PC-3 (cell line): ENCODE measurements at regions of chr5 and their contacts with region 1.

Region 1: DNA sequence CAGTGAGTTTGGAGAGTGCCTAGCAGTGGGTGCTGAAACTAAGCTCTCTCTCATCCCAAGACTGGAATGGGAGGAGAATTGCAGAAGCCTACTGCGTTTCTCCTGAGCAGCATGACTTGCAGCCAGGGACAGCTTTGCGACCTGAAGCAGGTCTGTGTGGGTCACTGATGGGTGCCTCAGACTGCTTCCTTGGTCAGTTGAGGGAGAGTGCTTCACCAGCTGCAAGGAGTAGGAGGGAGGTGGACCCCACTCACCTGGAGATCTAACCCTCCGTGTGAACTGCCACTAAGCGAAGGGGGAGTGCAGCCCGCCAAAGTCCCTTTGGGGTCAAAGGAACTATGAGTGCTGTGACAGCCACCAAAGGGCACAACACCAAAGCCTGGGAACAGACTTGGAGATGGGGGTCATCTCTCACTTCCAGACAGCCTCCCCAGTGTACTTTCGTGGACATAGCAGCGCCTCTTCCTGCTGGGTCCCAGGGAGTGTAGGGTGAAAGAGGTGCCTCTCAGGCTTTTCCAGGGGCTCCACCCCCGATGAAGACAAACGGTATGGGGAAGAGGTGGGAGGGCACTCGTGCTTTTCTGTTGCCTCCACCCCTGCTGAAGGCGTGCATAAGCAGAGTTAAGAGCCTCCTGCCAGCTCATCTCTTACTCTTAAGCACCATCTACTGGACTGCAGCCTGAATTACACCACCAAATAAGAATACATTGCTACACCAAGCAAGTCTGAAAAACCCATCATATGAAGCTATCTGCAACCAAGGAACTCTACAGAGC is 34.3 kb upstream of the MACIR start:
- DNase-seq: peak; percentile 92
- ATAC-seq: peak; percentile 94
- H3K4me3 ChIP-seq: peak overlapping the region; percentile 41
- H3K27ac ChIP-seq: 0 out of 2 replicates have a peak overlapping the region, but pooled peaks have one; percentile 7
- H3K4me1 ChIP-seq: peaks cover 9% of the 10 kb centered on the region
- H3K27me3 ChIP-seq: no peaks in the 10 kb centered on the region
- CTCF ChIP-seq: peak; percentile 87

Region 2: DNA sequence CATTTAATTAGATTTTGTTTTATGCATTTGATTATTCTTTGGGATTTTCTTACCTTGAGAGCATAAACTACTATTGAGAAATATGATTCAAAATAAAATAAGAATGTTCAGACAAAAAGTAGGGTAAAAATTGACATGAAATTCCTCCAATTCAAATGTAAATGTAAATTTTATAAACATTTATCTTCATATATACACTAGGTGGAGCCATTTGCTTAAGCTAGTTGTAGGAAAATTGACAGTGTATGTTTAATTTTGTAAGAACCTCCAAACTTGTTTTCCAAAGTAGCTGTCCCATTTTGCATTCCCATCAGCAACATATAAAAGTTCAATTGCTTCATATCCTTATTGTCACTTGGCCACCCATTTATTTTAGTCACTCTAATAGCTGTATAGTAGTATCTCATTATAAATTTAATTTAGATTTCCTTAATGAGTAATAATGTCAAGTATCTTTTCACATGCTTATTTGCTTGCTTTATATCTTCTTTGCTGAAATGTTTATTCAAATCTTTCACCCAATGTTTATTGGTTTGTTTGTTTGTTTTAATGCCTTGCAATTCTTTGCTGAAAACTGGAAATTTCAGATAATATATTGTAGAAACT is 687.9 kb before region 1 on chr5:
- CTCF ChIA-PET with region 1: no interaction called
- POLR2A ChIA-PET with region 1: no interaction called
- intact Hi-C with region 1: loop called (anchors 1 kb)
- DNase-seq: peak; percentile 63
- ATAC-seq: peak; percentile 57
- H3K4me3 ChIP-seq: no peak overlapping the region
- H3K27ac ChIP-seq: no peak overlapping the region
- H3K4me1 ChIP-seq: no peaks in the 10 kb centered on the region
- H3K27me3 ChIP-seq: peaks cover 3% of the 10 kb centered on the region
- CTCF ChIP-seq: peak; percentile 79

Region 3: DNA sequence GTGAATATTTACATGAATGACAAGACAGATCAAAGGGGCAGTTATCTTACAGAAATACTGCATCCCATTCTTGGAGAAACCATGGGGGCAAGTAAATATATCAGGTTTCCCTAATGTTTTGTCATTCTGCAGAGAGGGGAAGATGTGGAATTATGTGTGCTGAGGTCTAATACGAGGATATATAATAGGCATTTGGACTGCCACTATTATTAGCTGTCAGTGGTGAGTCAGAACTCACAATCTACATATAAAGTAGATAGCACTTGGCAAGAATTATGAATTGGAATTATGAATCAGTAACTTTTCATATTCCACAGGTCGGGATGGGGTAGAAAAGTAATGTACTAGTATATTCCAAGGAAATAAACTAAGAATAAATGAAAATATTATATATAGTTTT is 226.1 kb before region 1 on chr5:
- CTCF ChIA-PET with region 1: no interaction called
- POLR2A ChIA-PET with region 1: no interaction called
- intact Hi-C with region 1: no loop called
- DNase-seq: peak; percentile 49
- ATAC-seq: peak; percentile 93
- H3K4me3 ChIP-seq: no peak overlapping the region
- H3K27ac ChIP-seq: no peak overlapping the region
- H3K4me1 ChIP-seq: peaks cover 9% of the 10 kb centered on the region; the same call in 1 of the 2 replicates
- H3K27me3 ChIP-seq: no peaks in the 10 kb centered on the region
- CTCF ChIP-seq: no peak

Region 4: GRCh38 chr5:103041071-103041676 is 183.1 kb before region 1 on chr5:
- CTCF ChIA-PET with region 1: interaction called, 3 read pairs
- POLR2A ChIA-PET with region 1: no interaction called
- intact Hi-C with region 1: loop called (anchors 5 kb)
- DNase-seq: peak; percentile 88
- ATAC-seq: peak; percentile 78
- H3K4me3 ChIP-seq: no peak overlapping the region
- H3K27ac ChIP-seq: no peak overlapping the region
- H3K4me1 ChIP-seq: peaks cover 8% of the 10 kb centered on the region; the same call in 1 of the 2 replicates
- H3K27me3 ChIP-seq: no peaks in the 10 kb centered on the region
- CTCF ChIP-seq: peak; percentile 82

Region 5: GRCh38 chr5:103166706-103167105 is 57.6 kb before region 1 on chr5:
- CTCF ChIA-PET with region 1: no interaction called
- POLR2A ChIA-PET with region 1: interaction called, 11 read pairs
- intact Hi-C with region 1: no loop called
- DNase-seq: no peak
- ATAC-seq: no peak
- H3K4me3 ChIP-seq: no peak overlapping the region
- H3K27ac ChIP-seq: no peak overlapping the region
- H3K4me1 ChIP-seq: no peaks in the 10 kb centered on the region
- H3K27me3 ChIP-seq: no peaks in the 10 kb centered on the region
- CTCF ChIP-seq: no peak

Region 6: GRCh38 chr5:103178167-103178566 is 46.1 kb before region 1 on chr5:
- CTCF ChIA-PET with region 1: interaction called, 12 read pairs
- POLR2A ChIA-PET with region 1: no interaction called
- intact Hi-C with region 1: no loop called
- DNase-seq: peak; percentile 25
- ATAC-seq: no peak; the same call in 1 of the 2 replicates
- H3K4me3 ChIP-seq: no peak overlapping the region
- H3K27ac ChIP-seq: no peak overlapping the region
- H3K4me1 ChIP-seq: peaks cover 8% of the 10 kb centered on the region; the same call in 1 of the 2 replicates
- H3K27me3 ChIP-seq: no peaks in the 10 kb centered on the region
- CTCF ChIP-seq: peak; percentile 40; the same call in 1 of the 2 replicates

Region 7: GRCh38 chr5:103375350-103375749 is 151.0 kb after region 1 on chr5:
- CTCF ChIA-PET with region 1: no interaction called
- POLR2A ChIA-PET with region 1: no interaction called
- intact Hi-C with region 1: no loop called
- DNase-seq: peak; percentile 77
- ATAC-seq: peak; percentile 82
- H3K4me3 ChIP-seq: no peak overlapping the region
- H3K27ac ChIP-seq: no peak overlapping the region
- H3K4me1 ChIP-seq: peaks cover 16% of the 10 kb centered on the region
- H3K27me3 ChIP-seq: no peaks in the 10 kb centered on the region
- CTCF ChIP-seq: peak; percentile 71

Region 8: DNA sequence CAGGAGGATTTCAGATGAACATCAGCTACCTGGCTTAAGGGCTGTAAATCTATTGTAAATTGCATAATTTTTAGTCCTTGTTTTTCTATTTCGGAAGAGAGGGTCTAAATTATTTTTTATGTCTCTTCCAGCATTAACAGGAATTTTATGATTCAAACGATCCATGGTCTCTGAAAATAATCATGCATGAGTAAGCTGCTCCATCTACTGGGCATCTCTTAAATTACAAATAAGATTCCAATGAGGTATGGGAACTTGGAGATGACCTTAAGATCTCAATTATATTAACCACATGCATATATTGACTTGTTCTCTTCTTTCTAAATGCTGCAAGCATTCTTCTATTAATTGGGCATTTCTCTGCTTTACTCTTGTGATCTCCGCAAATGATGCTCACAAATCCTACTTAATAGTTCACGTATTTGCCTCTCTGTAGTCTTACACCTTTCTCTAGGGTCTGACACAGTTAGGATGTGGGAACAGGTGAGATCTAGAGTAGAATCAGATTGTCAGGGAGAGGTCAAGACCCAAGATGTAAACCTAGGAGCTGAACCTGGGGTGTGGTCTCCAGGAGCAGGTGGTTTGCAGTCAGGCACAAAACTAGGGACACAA is 251.4 kb after region 1 on chr5:
- CTCF ChIA-PET with region 1: interaction called, 3 read pairs
- POLR2A ChIA-PET with region 1: no interaction called
- intact Hi-C with region 1: loop called (anchors 2 kb)
- DNase-seq: peak; percentile 91
- ATAC-seq: peak; percentile 61
- H3K4me3 ChIP-seq: no peak overlapping the region
- H3K27ac ChIP-seq: no peak overlapping the region
- H3K4me1 ChIP-seq: peaks cover 23% of the 10 kb centered on the region
- H3K27me3 ChIP-seq: no peaks in the 10 kb centered on the region
- CTCF ChIP-seq: peak; percentile 95